Thyroid gland (tissue), 4 donors: ENCODE measurements at regions of chr16 and their contacts with region 1.

Region 1: GRCh38 chr16:89791278-89791995 is 25.0 kb downstream of the FANCA start:
- DNase-seq: peak; percentile 80 to 83
- H3K4me3 ChIP-seq: no peak overlapping the region
- H3K27ac ChIP-seq: no peak overlapping the region
- H3K4me1 ChIP-seq: no peaks in the 10 kb centered on the region
- H3K27me3 ChIP-seq: no peaks in the 10 kb centered on the region
- CTCF ChIP-seq: no peak
- POLR2A ChIP-seq: no peak

Region 2: DNA sequence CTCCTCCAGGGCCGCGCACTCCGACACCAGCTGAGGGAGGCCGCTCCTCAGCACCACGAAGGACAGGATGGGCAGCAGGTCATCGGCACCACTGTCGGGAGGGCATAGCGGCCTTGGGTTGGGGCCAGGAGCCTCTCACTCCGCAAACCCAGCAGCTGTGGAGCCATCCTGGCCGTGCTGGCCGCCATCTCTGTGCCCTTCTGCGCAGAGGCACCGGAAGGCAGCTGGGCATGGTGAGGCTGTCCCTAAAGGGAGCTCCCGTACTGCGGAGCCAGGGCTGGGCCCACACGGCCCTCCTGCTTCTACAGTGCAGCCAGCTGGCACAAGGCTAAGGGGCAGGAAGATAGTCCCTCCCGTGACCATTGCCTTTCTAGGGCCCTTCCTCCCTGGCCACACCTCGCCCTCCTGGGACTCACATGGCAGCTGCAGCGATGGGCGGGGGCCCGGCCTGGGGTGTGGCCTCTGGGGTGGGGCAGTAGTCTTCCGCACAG is 83.0 kb before region 1 on chr16:
- intact Hi-C with region 1: loop called (anchors 5 kb)
- DNase-seq: no peak
- H3K4me3 ChIP-seq: no peak overlapping the region
- H3K27ac ChIP-seq: no peak overlapping the region
- H3K4me1 ChIP-seq: peaks cover 7 to 10% of the 10 kb centered on the region in 2 donors
- H3K27me3 ChIP-seq: no peaks in the 10 kb centered on the region
- CTCF ChIP-seq: no peak
- POLR2A ChIP-seq: no peak

Region 3: DNA sequence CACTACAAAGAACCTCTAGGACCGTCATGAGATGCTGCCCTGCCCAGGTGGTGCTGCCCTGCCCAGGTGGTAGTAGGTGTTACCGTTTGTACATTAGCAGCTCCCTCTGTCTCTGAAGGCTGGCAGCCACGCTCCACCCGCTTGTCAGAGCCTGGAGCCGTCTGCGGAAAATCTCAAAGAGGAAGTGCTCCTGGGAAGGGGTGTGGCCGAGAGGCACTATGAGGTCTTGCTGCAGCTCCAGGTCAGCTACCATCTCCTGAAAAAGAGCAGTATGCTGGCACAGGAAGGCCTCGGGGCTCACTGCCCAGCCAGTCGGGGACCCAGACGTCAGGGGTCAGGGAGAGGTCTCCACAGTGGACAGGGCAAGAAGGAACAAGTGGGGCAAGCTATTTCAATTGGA is 41.8 kb before region 1 on chr16:
- intact Hi-C with region 1: no loop called
- DNase-seq: no peak
- H3K4me3 ChIP-seq: no peak overlapping the region
- H3K27ac ChIP-seq: no peak overlapping the region
- H3K4me1 ChIP-seq: no peaks in the 10 kb centered on the region
- H3K27me3 ChIP-seq: no peaks in the 10 kb centered on the region
- CTCF ChIP-seq: no peak
- POLR2A ChIP-seq: no peak